GM10248 (cell line): ENCODE measurements at regions of chr5 and their contacts with region 1.

Region 1: DNA sequence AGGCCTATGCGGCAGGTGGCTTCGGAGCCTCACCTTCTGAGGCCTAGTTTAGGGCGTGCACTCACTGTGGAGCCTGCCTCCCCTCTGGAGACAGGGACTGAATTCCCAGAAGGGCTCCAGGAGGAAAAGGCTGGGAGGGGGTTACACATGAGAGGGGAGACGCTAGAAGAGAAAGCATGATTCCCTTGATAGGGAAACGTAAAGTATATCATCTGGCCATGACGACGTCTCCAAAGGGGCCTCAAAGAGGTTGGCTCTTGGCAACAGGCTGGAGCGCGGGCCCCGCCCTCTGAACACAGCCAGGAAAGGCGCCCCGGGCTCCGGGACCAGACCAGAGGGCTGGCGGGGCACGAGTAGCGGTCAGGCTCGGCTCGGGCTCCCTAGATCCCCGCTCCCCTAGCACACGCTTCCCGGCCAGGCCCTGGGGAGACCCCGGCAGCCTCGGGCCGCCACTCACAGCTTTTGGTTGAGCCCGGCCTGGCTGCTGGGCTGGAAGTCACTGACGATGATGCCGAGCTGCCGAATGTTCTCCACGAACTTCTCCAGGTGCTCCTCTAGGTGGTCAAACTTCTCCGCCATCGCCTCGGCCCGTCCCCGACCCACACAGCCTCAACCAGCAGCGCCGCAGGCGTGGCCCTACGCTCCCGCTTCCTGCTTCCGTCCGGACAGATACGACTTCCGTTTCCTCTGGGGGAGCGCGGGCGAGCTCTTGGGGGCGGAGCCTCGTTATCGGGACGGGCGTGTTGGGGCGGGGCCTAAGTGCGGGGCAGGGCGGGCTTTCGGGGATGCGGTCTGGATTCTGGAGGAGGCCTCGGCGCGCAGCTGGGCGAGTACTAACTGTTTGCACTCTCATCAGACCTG is at the start of gene MED10:
- DNase-seq: peak; percentile 96
- CTCF ChIP-seq: no peak

Region 2: DNA sequence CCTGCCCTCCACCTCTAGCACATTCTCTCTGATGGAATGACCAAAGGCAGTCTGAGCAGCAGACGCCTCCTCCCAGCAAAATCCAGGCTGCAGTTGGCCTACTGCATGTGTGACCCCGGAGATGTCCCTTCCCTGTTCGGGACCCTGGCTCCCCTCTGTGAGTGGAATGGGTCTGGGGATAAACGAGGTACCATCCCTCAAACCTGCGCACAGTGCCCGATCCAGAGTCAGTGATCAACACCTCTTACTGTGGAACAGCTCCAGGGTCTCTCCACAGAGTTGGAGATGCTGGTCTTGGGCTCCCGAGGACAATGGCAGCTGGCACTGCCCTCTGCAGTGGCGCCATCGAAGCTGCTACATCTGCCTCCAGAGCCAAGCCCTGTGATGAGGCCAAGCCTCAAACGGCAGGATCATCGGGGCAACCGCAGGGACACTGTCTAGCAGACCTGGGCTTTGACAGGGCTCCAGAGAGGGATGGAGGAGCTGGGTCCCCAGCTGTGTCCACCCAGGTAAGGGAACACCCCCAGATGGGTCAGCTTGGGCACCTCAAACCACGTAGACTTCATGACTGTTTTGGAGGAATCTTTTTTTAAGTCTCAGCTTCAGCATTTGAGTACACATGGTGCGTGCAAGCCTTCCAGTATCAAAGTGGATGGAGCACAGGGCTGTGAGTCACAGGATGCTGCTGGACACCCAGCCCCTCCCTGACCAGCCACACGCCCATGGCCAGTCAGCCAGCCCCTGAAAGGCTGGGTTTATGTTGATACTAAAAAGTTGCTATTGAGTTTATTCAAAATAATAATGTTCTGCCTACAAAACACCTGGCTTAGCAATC is 12.8 kb before region 1 on chr5:
- CTCF ChIA-PET with region 1: interaction called, 18 read pairs
- POLR2A ChIA-PET with region 1: interaction called, 4 read pairs
- DNase-seq: no peak
- CTCF ChIP-seq: no peak

Region 3: DNA sequence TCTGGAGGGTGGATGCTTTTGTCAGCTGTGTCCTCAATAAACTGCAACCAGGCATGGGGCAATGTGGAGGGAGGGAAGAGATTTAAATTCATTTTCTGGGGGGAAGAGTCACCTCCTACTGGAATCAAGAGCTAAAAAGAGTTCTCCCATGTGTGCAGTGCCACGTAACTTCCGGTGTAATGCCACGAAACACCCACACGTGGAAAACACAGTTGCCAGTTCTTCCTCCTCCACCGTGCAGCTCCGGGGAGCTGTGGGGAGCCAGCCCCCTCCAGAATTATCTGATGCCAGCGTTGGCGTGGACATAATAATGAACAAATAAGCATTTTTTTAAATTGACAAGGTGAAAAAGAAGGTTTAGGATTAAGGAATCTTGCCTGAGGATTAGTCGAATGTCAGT is 32.3 kb after region 1 on chr5:
- CTCF ChIA-PET with region 1: no interaction called
- POLR2A ChIA-PET with region 1: no interaction called
- DNase-seq: no peak
- CTCF ChIP-seq: no peak

Region 4: DNA sequence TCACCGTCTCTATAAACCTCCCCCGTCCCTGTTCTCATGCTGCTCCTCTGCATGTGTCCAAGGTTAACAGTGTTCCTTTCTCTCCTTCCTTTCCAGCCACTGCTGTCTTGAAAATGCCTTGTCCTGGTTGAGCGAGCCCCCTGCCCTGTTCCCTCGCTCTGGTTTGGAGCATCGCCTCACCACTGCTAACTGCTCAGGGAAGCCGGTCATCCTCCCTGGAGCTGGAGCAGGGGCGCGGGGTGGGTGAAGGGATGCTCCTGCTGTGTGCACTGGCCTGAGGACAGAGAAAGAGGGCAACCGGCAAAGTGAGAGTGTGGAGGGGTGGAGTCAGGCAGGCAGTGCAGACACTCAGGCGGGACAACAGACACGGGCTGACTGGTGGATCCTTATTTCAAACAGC is 90.0 kb after region 1 on chr5:
- CTCF ChIA-PET with region 1: no interaction called
- POLR2A ChIA-PET with region 1: no interaction called
- DNase-seq: no peak
- CTCF ChIP-seq: no peak